ENCODE measurements at regions of chr4 and their contacts with region 1.

Region 1: DNA sequence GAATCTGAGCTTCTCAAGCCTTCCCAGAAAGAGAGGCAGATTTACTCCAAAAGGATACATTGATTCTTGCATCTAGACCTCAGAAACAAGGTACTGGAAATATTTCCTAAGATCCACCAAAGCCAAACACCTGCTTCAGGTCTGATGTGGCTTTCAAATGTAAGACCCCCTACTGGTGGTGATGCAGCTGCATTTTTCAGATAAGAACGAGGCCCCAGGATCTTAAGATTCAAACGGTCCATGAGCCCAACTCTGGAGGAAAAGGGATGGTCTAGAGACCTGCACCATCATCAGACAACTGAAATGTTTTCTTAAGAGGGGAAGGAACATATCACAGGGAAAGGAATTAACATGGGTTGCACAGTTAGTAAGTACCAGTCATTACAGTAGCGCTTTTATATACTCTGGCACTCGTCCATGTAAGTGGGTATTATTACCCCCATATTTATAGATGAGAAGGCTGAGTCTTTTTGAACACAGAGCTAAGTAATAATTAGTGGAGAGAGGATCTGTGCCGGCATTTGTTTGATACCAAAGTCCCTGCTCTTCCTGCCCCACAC is 73.7 kb downstream of the LEF1 start:
- DNase-seq: no peak
- H3K4me3 Mint-ChIP-seq: peak overlapping the region; percentile 11
- H3K27ac Mint-ChIP-seq: peak overlapping the region; percentile 96
- H3K4me1 Mint-ChIP-seq: peaks cover 86% of the 10 kb centered on the region
- H3K27me3 Mint-ChIP-seq: no peaks in the 10 kb centered on the region

Region 2: DNA sequence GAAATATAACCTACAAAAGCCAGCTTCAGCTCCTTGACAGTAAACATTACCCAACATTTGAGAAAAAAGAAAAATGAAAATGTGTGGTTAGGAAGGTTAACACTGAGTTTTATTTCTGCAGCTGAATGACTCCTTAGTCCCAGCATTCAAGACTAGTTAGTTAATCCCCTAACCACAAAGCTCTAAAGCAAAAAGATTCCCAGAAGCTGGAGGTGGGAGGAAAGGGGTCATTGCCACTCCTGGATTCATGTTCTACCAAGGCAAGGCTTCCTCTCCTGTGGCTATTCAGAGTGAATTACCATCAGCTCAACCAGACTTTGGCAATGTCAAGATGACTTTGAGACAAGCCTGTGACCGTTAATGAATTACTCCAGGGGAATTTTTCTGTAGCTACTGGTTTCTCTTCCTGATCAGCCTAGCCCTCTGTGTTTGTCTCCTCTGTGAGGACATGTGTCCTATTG is 41.7 kb before region 1 on chr4:
- CTCF ChIA-PET with region 1: interaction called, 5 read pairs
- intact Hi-C with region 1: loop called (anchors 1 kb)
- DNase-seq: no peak
- H3K4me3 Mint-ChIP-seq: peak overlapping the region; percentile 34
- H3K27ac Mint-ChIP-seq: peak overlapping the region; percentile 93
- H3K4me1 Mint-ChIP-seq: peaks cover 94% of the 10 kb centered on the region
- H3K27me3 Mint-ChIP-seq: no peaks in the 10 kb centered on the region

Region 3: DNA sequence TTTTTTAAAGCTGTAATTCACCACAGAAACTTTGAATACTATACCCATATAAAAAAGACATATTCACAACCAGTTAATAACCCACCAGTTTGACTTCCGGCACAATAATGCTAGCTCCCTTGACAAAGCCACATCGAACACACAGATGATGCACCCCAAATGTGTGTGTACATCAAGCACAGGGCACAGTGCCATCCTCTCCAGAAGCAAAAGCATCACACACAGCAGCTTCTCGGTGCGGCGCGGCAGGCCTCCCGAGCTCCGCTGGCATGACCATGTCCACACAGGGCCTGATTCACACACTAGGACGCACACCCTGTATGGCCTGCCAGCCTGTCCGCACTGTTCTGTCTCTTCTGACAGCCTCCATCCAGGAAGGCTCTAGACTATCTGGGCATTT is 14.3 kb before region 1 on chr4:
- CTCF ChIA-PET with region 1: interaction called, 9 read pairs
- intact Hi-C with region 1: loop called (anchors 1 kb)
- DNase-seq: peak; percentile 73
- H3K4me3 Mint-ChIP-seq: peak overlapping the region; percentile 74
- H3K27ac Mint-ChIP-seq: peak overlapping the region; percentile 93
- H3K4me1 Mint-ChIP-seq: peaks cover 79% of the 10 kb centered on the region
- H3K27me3 Mint-ChIP-seq: no peaks in the 10 kb centered on the region

Region 4: GRCh38 chr4:108425988-108426387 is 331.0 kb after region 1 on chr4:
- CTCF ChIA-PET with region 1: no interaction called
- intact Hi-C with region 1: loop called (anchors 5 kb)
- DNase-seq: no peak
- H3K4me3 Mint-ChIP-seq: no peak overlapping the region
- H3K27ac Mint-ChIP-seq: peak overlapping the region; percentile 48
- H3K4me1 Mint-ChIP-seq: peaks cover 21% of the 10 kb centered on the region
- H3K27me3 Mint-ChIP-seq: no peaks in the 10 kb centered on the region